Activated CD4-positive, alpha-beta T cell treated with anti-CD3 and anti-CD28 coated beads for 36 hours (primary cell): ENCODE measurements at regions of chr7 and their contacts with region 1.

Region 1: DNA sequence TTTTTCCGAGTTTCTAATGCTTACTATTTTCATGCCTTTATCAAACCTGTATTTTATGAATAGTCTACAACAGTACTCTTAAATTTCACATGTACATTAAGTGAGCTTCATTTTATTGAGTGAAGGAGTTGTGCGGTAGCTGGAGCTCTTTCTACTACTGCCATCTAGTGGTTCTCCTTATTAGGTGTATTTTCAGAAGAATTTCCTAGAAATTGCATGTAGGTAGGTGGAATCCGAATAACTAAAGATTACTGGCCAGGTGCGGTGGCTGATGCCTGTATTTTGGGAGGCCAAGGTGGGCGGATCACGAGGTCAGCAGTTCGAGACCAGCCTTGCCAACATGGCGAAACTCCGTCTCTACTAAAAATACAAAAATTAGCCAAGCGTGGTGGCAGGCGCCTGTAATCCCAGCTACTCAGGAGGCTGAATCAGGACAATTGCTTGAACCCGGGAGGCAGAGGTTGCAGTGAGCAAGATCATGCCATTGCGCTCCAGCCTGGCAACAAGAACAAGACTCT is 38.3 kb downstream of the LRRC72 start:
- DNase-seq: peak; percentile 47
- ATAC-seq: peak; percentile 42
- H3K4me3 Mint-ChIP-seq: no peak overlapping the region
- H3K27ac Mint-ChIP-seq: peak overlapping the region; percentile 76
- H3K4me1 Mint-ChIP-seq: peaks cover 24% of the 10 kb centered on the region
- H3K27me3 Mint-ChIP-seq: peaks cover 3% of the 10 kb centered on the region

Region 2: DNA sequence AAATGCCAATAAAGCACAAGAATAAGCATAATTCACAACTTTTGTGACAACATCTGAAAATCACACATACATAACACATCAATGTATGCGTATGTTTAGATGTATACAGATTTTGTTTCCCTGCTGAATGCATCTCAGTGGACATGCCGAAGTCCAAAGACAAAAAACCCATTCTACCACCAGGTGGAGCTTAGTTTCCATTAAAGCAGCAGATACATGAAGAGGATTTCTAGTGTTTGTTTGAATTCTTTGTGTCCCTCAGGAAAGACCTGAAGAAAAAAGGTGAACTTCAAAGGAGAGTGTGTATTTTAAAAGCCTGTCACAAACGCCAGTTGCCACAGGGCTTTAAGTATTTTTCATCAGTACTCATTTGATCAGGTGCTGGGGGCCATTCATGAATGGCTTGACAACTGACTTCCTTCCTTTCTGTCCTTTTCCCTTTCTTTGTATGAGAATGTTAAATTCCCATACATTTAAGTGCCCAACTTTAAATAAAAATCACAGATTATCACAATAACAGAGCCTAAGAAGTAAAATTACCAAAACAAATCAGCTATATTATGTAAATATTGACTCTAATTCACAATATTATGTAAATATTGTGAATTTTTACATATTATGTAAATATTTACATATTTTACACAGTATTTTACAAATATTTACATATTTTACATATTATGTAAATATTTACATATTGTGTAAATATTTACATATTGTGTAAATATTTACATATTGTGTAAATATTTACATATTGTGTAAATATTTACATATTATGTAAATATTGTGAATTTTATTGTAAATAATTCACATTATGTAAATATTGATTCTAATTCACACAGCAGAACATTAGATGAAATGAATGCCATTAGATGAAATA is 486.7 kb before region 1 on chr7:
- CTCF ChIA-PET with region 1: interaction called, 32 read pairs
- POLR2A ChIA-PET with region 1: no interaction called
- intact Hi-C with region 1: loop called (anchors 1 kb)
- DNase-seq: peak; percentile 23
- ATAC-seq: peak; percentile 49
- H3K4me3 Mint-ChIP-seq: no peak overlapping the region
- H3K27ac Mint-ChIP-seq: no peak overlapping the region
- H3K4me1 Mint-ChIP-seq: no peaks in the 10 kb centered on the region
- H3K27me3 Mint-ChIP-seq: no peaks in the 10 kb centered on the region

Region 3: GRCh38 chr7:16420649-16421332 is 144.2 kb before region 1 on chr7:
- CTCF ChIA-PET with region 1: interaction called, 27 read pairs
- POLR2A ChIA-PET with region 1: interaction called, 4 read pairs
- intact Hi-C with region 1: loop called in 1 of 2 experiments (anchors 2 kb)
- DNase-seq: peak; percentile 93
- ATAC-seq: peak; percentile 93
- H3K4me3 Mint-ChIP-seq: peak overlapping the region; percentile 78
- H3K27ac Mint-ChIP-seq: peak overlapping the region; percentile 97
- H3K4me1 Mint-ChIP-seq: peaks cover 20% of the 10 kb centered on the region
- H3K27me3 Mint-ChIP-seq: no peaks in the 10 kb centered on the region

Region 4: GRCh38 chr7:16431646-16432424 is 133.1 kb before region 1 on chr7:
- CTCF ChIA-PET with region 1: interaction called, 64 read pairs
- POLR2A ChIA-PET with region 1: interaction called, 3 read pairs
- intact Hi-C with region 1: loop called (anchors 1 kb)
- DNase-seq: peak; percentile 47
- ATAC-seq: peak; percentile 57
- H3K4me3 Mint-ChIP-seq: no peak overlapping the region
- H3K27ac Mint-ChIP-seq: no peak overlapping the region
- H3K4me1 Mint-ChIP-seq: peaks cover 4% of the 10 kb centered on the region
- H3K27me3 Mint-ChIP-seq: peaks cover 5% of the 10 kb centered on the region

Region 5: GRCh38 chr7:16492513-16493062 is 72.4 kb before region 1 on chr7:
- CTCF ChIA-PET with region 1: no interaction called
- POLR2A ChIA-PET with region 1: no interaction called
- intact Hi-C with region 1: loop called in 1 of 2 experiments (anchors 2 kb)
- DNase-seq: peak; percentile 15
- ATAC-seq: peak; percentile 91
- H3K4me3 Mint-ChIP-seq: no peak overlapping the region
- H3K27ac Mint-ChIP-seq: no peak overlapping the region
- H3K4me1 Mint-ChIP-seq: peaks cover 6% of the 10 kb centered on the region
- H3K27me3 Mint-ChIP-seq: peaks cover 8% of the 10 kb centered on the region

Region 6: GRCh38 chr7:16554518-16555236 is 10.3 kb before region 1 on chr7:
- CTCF ChIA-PET with region 1: interaction called, 27 read pairs
- POLR2A ChIA-PET with region 1: no interaction called
- intact Hi-C with region 1: no loop called
- DNase-seq: no peak
- ATAC-seq: no peak
- H3K4me3 Mint-ChIP-seq: no peak overlapping the region
- H3K27ac Mint-ChIP-seq: no peak overlapping the region
- H3K4me1 Mint-ChIP-seq: no peaks in the 10 kb centered on the region
- H3K27me3 Mint-ChIP-seq: peaks cover 9% of the 10 kb centered on the region

Region 7: DNA sequence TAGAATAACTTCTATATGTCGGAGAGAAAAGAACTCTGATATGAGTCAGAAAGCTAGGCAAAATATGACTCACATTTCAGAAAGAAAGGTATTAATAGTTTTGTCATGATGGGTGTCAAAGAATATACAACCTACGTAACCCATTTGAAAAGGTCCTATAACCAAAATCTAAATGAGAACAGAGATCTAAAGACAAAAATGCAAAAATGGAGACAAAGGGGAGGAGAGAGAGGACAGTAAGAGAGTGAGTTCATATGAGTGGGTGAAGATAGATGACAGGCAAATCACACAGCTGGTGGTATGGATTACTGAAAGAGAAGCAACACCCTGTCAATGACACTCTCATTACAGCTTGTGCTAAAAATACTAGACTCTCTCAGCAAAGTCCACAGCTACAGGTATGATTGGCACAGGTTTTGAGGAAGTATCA is 55.0 kb after region 1 on chr7:
- CTCF ChIA-PET with region 1: interaction called, 3 read pairs
- POLR2A ChIA-PET with region 1: no interaction called
- intact Hi-C with region 1: loop called in 1 of 2 experiments (anchors 1 kb)
- DNase-seq: peak; percentile 25
- ATAC-seq: peak; percentile 98
- H3K4me3 Mint-ChIP-seq: peak overlapping the region; percentile 5
- H3K27ac Mint-ChIP-seq: peak overlapping the region; percentile 83
- H3K4me1 Mint-ChIP-seq: peaks cover 20% of the 10 kb centered on the region
- H3K27me3 Mint-ChIP-seq: no peaks in the 10 kb centered on the region

Region 8: GRCh38 chr7:16774986-16775385 is 210.0 kb after region 1 on chr7:
- CTCF ChIA-PET with region 1: no interaction called
- POLR2A ChIA-PET with region 1: no interaction called
- intact Hi-C with region 1: no loop called
- DNase-seq: no peak
- ATAC-seq: no peak
- H3K4me3 Mint-ChIP-seq: no peak overlapping the region
- H3K27ac Mint-ChIP-seq: no peak overlapping the region
- H3K4me1 Mint-ChIP-seq: no peaks in the 10 kb centered on the region
- H3K27me3 Mint-ChIP-seq: peaks cover 2% of the 10 kb centered on the region